ENCODE measurements at regions of chr15 and their contacts with region 1.

Region 1: GRCh38 chr15:55218056-55218455 is 21.3 kb upstream of the RSL24D1 start:
- DNase-seq: no peak
- H3K4me3 ChIP-seq: no peak overlapping the region
- CTCF ChIP-seq: no peak
- POLR2A ChIP-seq: no peak

Region 2: DNA sequence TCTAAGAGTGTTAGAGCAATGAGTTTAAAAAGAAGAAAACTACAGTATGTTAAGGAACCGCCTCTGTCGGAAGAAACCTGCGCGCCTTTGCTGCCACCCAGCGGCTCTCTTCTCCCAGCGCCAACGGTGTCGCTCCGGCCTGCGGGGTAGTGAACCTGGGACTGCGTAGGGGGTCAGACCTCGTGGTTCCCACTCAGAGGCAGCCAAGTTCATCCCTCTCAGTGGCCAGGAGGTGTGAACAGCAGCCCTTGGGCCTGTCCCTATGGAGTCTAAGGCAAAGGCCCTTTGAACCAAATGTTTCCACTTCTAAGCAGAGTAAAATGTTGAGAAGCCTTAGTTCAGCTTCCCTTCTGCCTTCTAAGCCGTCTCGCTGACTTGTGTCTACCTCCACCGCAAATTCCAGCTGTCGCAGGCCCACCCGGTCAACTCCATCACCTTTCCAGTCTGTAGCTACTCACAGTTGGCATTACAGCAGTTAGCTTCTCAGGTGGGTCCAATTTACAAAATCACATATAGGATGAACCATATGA is 72.5 kb after region 1 on chr15:
- intact Hi-C with region 1: loop called (anchors 5 kb)
- DNase-seq: peak; percentile 79 to 97
- H3K4me3 ChIP-seq: peak overlapping the region; percentile 82
- CTCF ChIP-seq: peak in 1 of 3 donors; percentile 69
- POLR2A ChIP-seq: no peak